Common myeloid progenitor, CD34-positive (primary cell): ENCODE measurements at regions of chr6 and their contacts with region 1.

Region 1: DNA sequence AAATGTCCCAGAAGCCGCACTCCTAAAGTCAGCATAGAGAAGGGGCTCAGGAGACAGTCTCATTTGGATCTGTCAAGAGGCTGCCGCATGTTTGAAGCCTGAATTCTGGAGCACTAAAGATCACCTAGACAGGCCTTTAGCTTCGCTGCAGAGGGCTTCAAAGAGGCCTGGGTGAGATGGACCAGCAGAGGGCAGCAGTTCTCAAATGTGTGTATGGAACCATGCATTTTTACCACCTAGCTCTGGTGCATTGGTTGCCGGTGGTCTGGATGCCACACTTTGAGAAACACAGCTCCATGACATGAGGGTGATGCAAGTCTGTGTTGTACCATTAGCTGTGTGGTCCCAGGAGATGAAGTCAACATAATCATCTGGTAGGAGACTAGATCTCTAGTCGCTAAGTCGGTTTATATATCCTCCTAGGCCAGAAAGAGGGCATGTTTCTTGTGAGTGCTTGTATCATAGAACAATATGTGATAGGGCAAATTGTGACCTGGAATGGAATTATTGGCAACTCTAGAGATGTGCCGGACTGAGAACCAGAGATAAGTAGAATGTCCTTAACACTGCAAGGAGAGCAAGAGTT is 64.8 kb downstream of the KIAA0319 start:
- DNase-seq: peak; percentile 76 to 88 (median 80)
- H3K4me3 ChIP-seq: no peak overlapping the region
- H3K27ac ChIP-seq: no peak overlapping the region
- H3K4me1 ChIP-seq: peaks cover 0 to 5% (median 2%) of the 10 kb centered on the region in 4 experiments
- H3K27me3 ChIP-seq: no peaks in the 10 kb centered on the region

Region 2: GRCh38 chr6:24154121-24154520 is 427.1 kb before region 1 on chr6:
- CTCF ChIA-PET with region 1: no interaction called
- POLR2A ChIA-PET with region 1: no interaction called
- DNase-seq: no peak
- H3K4me3 ChIP-seq: no peak overlapping the region
- H3K27ac ChIP-seq: no peak overlapping the region
- H3K4me1 ChIP-seq: no peaks in the 10 kb centered on the region
- H3K27me3 ChIP-seq: no peaks in the 10 kb centered on the region

Region 3: GRCh38 chr6:24566020-24566767 is 15.0 kb before region 1 on chr6:
- CTCF ChIA-PET with region 1: interaction called, 14 read pairs
- POLR2A ChIA-PET with region 1: no interaction called
- DNase-seq: no peak
- H3K4me3 ChIP-seq: no peak overlapping the region
- H3K27ac ChIP-seq: no peak overlapping the region
- H3K4me1 ChIP-seq: no peaks in the 10 kb centered on the region
- H3K27me3 ChIP-seq: no peaks in the 10 kb centered on the region

Region 4: GRCh38 chr6:24595512-24596217 is 14.5 kb after region 1 on chr6:
- CTCF ChIA-PET with region 1: interaction called, 10 read pairs
- POLR2A ChIA-PET with region 1: no interaction called
- DNase-seq: no peak
- H3K4me3 ChIP-seq: no peak overlapping the region
- H3K27ac ChIP-seq: no peak overlapping the region
- H3K4me1 ChIP-seq: no peaks in the 10 kb centered on the region
- H3K27me3 ChIP-seq: no peaks in the 10 kb centered on the region

Region 5: DNA sequence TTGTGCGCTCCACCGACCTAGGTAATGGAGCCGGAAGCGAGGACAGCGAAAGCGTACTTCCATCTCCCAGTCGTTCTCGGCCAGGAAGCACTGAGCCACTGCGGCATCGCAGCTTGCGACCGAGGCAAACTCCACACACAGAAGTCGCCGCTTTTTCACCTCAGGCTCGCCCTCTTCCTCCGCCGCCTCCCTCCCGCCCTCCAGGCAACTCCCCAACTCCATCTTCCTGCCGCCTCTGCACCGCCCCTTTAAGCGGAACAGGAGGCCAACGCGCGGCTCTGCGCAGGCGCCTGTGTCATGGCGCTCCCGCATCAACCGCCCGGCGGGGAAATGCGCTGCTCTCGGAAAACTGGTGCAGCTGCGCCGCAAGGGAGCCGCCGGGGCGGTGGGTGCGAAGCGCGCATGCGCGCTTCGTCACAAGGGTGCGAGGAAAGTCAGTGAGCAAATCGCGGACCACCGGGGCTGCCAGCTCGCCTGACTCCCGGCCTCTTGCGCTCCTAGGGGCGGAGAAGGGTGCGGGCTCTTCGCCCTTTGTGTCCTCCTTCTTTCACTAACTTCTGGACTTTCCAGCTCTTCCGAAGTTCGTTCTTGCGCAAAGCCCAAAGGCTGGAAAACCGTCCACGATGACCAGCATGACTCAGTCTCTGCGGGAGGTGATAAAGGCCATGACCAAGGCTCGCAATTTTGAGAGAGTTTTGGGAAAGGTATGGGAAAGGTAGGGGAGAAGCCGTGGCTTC is 85.6 kb after region 1 on chr6 and contains the starts of genes ACOT13 and TDP2:
- CTCF ChIA-PET with region 1: interaction called, 29 read pairs
- POLR2A ChIA-PET with region 1: interaction called, 3 read pairs
- DNase-seq: peak; percentile 98 to 100 (median 99)
- H3K4me3 ChIP-seq: peak within 1 kb of the TSS; percentile 96 to 100 (median 99)
- H3K27ac ChIP-seq: peak within 1 kb of the TSS; percentile 93 to 96
- H3K4me1 ChIP-seq: peaks cover 11 to 25% (median 18%) of the 10 kb centered on the region in 4 experiments
- H3K27me3 ChIP-seq: no peaks in the 10 kb centered on the region

Region 6: GRCh38 chr6:24689964-24690363 is 108.8 kb after region 1 on chr6:
- CTCF ChIA-PET with region 1: interaction called, 150 read pairs
- POLR2A ChIA-PET with region 1: no interaction called
- DNase-seq: no peak
- H3K4me3 ChIP-seq: no peak overlapping the region
- H3K27ac ChIP-seq: no peak overlapping the region
- H3K4me1 ChIP-seq: no peaks in the 10 kb centered on the region
- H3K27me3 ChIP-seq: no peaks in the 10 kb centered on the region

Region 7: GRCh38 chr6:24699521-24700359 is 118.6 kb after region 1 on chr6:
- CTCF ChIA-PET with region 1: interaction called, 150 read pairs
- POLR2A ChIA-PET with region 1: no interaction called
- DNase-seq: no peak
- H3K4me3 ChIP-seq: no peak overlapping the region
- H3K27ac ChIP-seq: no peak overlapping the region
- H3K4me1 ChIP-seq: no peaks in the 10 kb centered on the region
- H3K27me3 ChIP-seq: no peaks in the 10 kb centered on the region